PC-9 (cell line): ENCODE measurements at regions of chr2 and their contacts with region 1.

Region 1: DNA sequence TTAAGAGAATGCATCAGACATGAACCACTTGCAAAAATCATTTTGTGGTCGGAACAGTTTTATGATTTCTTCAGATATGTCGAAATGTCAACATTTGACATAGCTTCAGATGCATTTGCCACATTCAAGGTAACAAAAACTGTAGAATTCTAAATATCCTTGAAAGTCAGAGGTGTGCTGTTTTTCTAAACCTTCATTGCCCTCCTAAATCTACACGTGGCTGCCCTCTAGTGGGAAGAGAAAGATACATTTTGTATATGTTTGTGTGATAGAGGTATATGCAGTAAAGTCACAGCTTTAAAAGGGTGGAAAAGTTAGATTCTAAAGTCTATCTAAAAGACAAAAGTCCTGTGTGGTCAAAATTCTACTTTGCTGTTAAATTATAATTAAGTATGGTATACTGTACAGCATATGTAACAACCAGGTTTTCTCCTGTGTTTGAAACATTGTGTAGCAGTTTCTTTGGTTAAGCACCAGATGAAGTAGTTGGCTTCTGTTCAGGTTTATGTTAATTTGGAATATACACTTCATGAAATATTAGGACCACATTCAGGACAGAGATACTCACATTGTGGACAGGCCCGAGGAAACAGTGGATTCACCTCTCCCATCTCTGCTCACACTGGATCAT is 65.9 kb upstream of the ITM2C start:
- DNase-seq: peak in 1 of 2 experiments; percentile 70
- H3K4me3 ChIP-seq: no peak overlapping the region
- H3K27ac ChIP-seq: peak overlapping the region; percentile 30
- H3K4me1 ChIP-seq: peaks cover 47% of the 10 kb centered on the region
- H3K27me3 ChIP-seq: no peaks in the 10 kb centered on the region
- CTCF ChIP-seq: peak; percentile 82

Region 2: GRCh38 chr2:230219419-230220331 is 579.2 kb before region 1 on chr2 and contains the start of gene SP110:
- CTCF ChIA-PET with region 1: no interaction called
- POLR2A ChIA-PET with region 1: no interaction called
- intact Hi-C with region 1: loop called (anchors 5 kb)
- DNase-seq: peak; percentile 68 to 79
- H3K4me3 ChIP-seq: peak within 1 kb of the TSS; percentile 65
- H3K27ac ChIP-seq: peak within 1 kb of the TSS; percentile 16; the same call in 1 of the 2 replicates
- H3K4me1 ChIP-seq: peaks cover 29% of the 10 kb centered on the region
- H3K27me3 ChIP-seq: no peaks in the 10 kb centered on the region
- CTCF ChIP-seq: no peak
- total RNA-seq, gene SP110: 6.8 and 10.5 TPM in 2 replicates

Region 3: GRCh38 chr2:230691005-230691647 is 107.8 kb before region 1 on chr2:
- CTCF ChIA-PET with region 1: interaction called, 4 read pairs
- POLR2A ChIA-PET with region 1: interaction called, 20 read pairs
- intact Hi-C with region 1: loop called (anchors 5 kb)
- DNase-seq: peak; percentile 83 to 99
- H3K4me3 ChIP-seq: no peak overlapping the region
- H3K27ac ChIP-seq: peak overlapping the region; percentile 84
- H3K4me1 ChIP-seq: peaks cover 97% of the 10 kb centered on the region
- H3K27me3 ChIP-seq: no peaks in the 10 kb centered on the region
- CTCF ChIP-seq: no peak

Region 4: GRCh38 chr2:230738391-230738811 is 60.5 kb before region 1 on chr2:
- CTCF ChIA-PET with region 1: no interaction called
- POLR2A ChIA-PET with region 1: interaction called, 15 read pairs
- intact Hi-C with region 1: no loop called
- DNase-seq: no peak
- H3K4me3 ChIP-seq: peak overlapping the region; percentile 22; the same call in 1 of the 2 replicates
- H3K27ac ChIP-seq: peak overlapping the region; percentile 94
- H3K4me1 ChIP-seq: peaks cover 56% of the 10 kb centered on the region
- H3K27me3 ChIP-seq: no peaks in the 10 kb centered on the region
- CTCF ChIP-seq: no peak

Region 5: DNA sequence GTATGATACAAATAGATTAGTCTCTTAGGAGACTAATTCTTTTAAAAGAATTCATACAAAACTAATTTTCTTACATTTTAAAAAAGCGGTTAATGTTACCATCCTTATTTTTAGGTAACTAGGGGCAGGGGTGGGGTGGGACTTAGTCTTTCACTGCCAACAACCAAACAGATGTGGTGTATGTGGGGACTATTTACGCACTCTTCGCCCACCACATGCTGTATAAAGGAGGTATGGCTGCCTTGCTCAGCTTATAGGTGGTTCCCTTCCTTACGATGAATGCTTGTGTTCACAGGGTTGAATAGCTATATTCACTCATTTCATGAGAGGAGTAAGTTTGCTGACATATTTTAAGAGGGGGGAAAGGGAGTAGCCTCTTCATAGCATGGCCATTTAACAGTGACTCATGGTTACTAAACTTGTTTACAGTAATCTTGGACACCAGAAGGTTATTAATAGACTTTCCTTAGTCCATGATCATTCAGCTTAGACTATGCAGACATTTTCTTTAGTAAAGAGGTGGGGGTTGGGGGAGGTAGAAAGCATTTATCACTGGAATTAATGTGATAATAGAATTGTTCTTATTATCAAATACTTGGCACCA is 24.4 kb before region 1 on chr2:
- CTCF ChIA-PET with region 1: no interaction called
- POLR2A ChIA-PET with region 1: interaction called, 14 read pairs
- intact Hi-C with region 1: loop called (anchors 1 kb)
- DNase-seq: peak in 1 of 2 experiments; percentile 81
- H3K4me3 ChIP-seq: no peak overlapping the region
- H3K27ac ChIP-seq: peak overlapping the region; percentile 61
- H3K4me1 ChIP-seq: peaks cover 63% of the 10 kb centered on the region
- H3K27me3 ChIP-seq: no peaks in the 10 kb centered on the region
- CTCF ChIP-seq: no peak

Region 6: DNA sequence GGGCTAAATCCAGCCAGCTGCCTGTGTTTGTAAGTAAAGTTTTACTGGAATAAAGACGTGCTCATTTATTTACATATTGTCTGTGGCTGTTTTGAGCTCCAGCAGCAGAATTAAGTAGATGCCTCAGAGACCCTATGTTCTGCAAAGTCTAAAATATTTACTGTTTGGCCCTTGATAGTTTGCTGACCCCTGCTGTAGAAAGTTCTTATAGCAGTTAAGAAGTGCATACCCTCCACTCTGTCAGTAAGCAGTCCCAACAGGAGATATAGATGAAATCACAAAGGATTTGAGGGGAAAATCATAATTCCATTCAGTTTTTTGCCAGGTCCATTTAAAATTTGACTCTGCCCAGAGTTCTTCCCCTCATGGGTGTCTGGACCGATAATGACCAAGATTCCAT is 15.7 kb after region 1 on chr2:
- CTCF ChIA-PET with region 1: no interaction called
- POLR2A ChIA-PET with region 1: interaction called, 15 read pairs
- intact Hi-C with region 1: no loop called
- DNase-seq: no peak
- H3K4me3 ChIP-seq: no peak overlapping the region
- H3K27ac ChIP-seq: no peak overlapping the region
- H3K4me1 ChIP-seq: no peaks in the 10 kb centered on the region
- H3K27me3 ChIP-seq: no peaks in the 10 kb centered on the region
- CTCF ChIP-seq: peak; percentile 59

Region 7: GRCh38 chr2:231161877-231162329 is 363.0 kb after region 1 on chr2:
- CTCF ChIA-PET with region 1: no interaction called
- POLR2A ChIA-PET with region 1: no interaction called
- intact Hi-C with region 1: no loop called
- DNase-seq: peak; percentile 12 to 79
- H3K4me3 ChIP-seq: no peak overlapping the region
- H3K27ac ChIP-seq: peak overlapping the region; percentile 93
- H3K4me1 ChIP-seq: peaks cover 22% of the 10 kb centered on the region
- H3K27me3 ChIP-seq: no peaks in the 10 kb centered on the region
- CTCF ChIP-seq: no peak